ENCODE measurements at regions of chr11 and their contacts with region 1.

Region 1: DNA sequence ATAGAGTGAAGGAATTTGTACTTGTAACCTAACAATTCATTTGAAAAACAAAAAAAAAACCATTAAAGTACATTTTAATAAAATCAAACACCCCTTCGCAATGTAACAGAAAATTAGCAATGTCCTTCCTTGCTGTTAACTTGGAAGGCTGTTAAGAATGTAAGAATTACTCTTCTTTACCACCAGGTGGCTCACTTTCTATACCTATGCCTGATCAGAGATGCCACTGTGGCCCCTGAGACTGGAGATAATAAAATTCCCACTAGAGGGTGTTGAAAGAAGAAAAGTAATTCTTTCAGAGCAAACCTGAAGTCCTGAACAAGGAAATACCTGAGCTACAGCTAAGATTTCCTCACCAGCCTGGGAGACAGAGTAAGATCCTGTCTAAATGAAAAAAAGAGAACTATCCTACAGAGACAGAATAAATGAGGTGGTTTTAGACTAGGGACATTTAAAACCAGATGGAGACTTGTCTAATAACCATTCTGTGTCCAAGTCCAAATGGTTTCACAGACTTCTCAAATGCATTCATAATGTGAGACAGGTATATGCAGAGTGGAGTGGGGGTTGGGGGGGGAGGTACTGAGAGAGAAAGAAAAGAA is 1089.3 kb downstream of the FAM181B start:
- DNase-seq: peak; percentile 17 to 53 (median 34)
- H3K4me3 ChIP-seq: no peak overlapping the region
- H3K27ac ChIP-seq: no peak overlapping the region
- H3K4me1 ChIP-seq: no peaks in the 10 kb centered on the region
- H3K27me3 ChIP-seq: peaks cover 4% of the 10 kb centered on the region
- CTCF ChIP-seq: peak; percentile 61 to 76 (median 71)
- POLR2A ChIP-seq: no peak

Region 2: GRCh38 chr11:81548123-81548522 is 96.2 kb before region 1 on chr11:
- intact Hi-C with region 1: no loop called
- DNase-seq: no peak
- H3K4me3 ChIP-seq: no peak overlapping the region
- H3K27ac ChIP-seq: no peak overlapping the region
- H3K4me1 ChIP-seq: no peaks in the 10 kb centered on the region
- H3K27me3 ChIP-seq: no peaks in the 10 kb centered on the region
- CTCF ChIP-seq: no peak
- POLR2A ChIP-seq: no peak

Region 3: GRCh38 chr11:81700076-81700475 is 55.7 kb after region 1 on chr11:
- intact Hi-C with region 1: no loop called
- DNase-seq: no peak
- H3K4me3 ChIP-seq: no peak overlapping the region
- H3K27ac ChIP-seq: no peak overlapping the region
- H3K4me1 ChIP-seq: no peaks in the 10 kb centered on the region
- H3K27me3 ChIP-seq: no peaks in the 10 kb centered on the region
- CTCF ChIP-seq: no peak
- POLR2A ChIP-seq: no peak

Region 4: DNA sequence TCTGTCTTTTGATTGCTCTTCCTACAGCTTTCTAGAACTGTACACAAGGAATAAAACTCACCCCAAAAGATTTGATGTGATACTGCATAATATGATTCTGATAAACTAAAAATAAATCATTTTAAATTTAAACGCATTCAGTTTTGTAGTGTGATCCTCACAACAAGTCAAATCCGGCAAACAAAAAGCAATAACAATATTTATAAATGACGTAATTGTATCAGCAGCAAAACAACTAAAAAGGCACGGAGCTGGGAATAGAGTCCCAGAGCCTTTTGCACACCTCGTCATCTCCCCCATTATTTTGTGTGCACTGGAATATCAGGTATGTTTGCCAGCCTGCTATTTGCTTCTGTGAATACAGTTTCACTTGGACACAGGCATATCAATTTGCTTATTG is 96.9 kb after region 1 on chr11:
- intact Hi-C with region 1: no loop called
- DNase-seq: no peak
- H3K4me3 ChIP-seq: peak overlapping the region in 1 of 4 donors; percentile 14
- H3K27ac ChIP-seq: no peak overlapping the region
- H3K4me1 ChIP-seq: no peaks in the 10 kb centered on the region
- H3K27me3 ChIP-seq: no peaks in the 10 kb centered on the region
- CTCF ChIP-seq: no peak
- POLR2A ChIP-seq: no peak

Region 5: GRCh38 chr11:82229341-82229740 is 585.0 kb after region 1 on chr11:
- intact Hi-C with region 1: loop called in 1 of 2 experiments (anchors 5 kb)
- DNase-seq: peak in 1 of 7 donors; percentile 4
- H3K4me3 ChIP-seq: no peak overlapping the region
- H3K27ac ChIP-seq: no peak overlapping the region
- H3K4me1 ChIP-seq: no peaks in the 10 kb centered on the region
- H3K27me3 ChIP-seq: peaks cover 7% of the 10 kb centered on the region
- CTCF ChIP-seq: peak; percentile 14 to 59 (median 40)
- POLR2A ChIP-seq: no peak